ENCODE measurements at regions of chr14 and their contacts with region 1.

Region 1: DNA sequence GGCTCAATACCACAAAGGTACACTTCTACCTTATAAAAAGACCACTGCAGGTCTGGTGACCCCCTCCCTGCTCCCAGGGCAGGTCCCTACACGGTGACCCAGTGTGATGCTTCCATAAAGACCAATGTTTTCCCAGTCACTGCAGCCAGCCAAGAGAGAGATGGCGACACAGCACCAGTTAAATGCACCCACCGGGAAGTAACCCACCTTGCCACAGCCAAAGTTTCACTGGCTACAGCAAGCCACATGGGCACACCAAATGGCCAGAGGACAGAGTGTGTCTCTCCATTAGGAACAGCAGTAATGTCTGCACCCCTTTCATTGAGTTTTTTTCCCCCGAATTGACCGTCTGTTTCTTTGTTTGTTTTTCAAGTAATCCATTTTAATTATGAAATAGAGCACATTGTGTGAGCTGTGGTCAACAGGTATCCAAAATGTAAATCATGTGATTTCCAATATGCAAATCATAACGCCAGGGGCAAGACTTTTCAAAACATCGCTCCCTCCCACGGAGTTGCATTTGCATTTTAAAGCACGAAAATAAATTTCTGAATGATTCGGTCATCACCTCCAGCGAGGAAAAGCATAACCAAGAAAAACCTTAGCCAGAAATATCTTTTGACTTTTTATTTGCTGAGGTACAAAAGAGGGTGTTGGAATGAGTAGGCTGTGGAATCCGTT is 48.9 kb upstream of the EML1 start:
- DNase-seq: peak in 1 of 5 donors; percentile 12
- ATAC-seq: no peak
- H3K4me3 ChIP-seq: no peak overlapping the region
- H3K27ac ChIP-seq: peak overlapping the region in 3 of 12 donors; percentile 75 to 85 (median 82)
- H3K4me1 ChIP-seq: peaks cover 12 to 75% (median 42%) of the 10 kb centered on the region in 12 donors
- H3K27me3 ChIP-seq: no peaks in the 10 kb centered on the region
- CTCF ChIP-seq: no peak
- POLR2A ChIP-seq: no peak

Region 2: DNA sequence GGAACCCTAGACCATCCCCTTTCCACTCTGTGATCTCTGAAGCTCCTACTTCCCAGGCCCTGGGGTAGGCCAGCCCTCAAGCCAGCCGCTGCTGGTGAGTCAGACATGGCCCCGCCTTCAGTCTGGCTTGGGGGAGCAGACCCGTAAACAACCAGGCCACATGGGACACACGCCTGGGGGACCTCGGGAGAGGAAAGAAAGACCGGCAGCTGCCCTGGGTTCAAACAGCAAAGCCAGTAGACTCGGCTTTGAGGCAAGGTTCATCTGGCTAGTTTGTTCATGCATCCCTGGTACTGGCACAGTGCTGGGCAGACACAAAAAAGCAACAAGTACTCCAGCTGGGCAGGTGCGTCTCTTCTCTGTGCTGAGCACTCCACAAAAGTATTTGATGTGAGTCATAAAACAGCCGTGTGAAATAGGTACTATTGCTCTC is 365.5 kb before region 1 on chr14:
- intact Hi-C with region 1: no loop called
- DNase-seq: no peak
- ATAC-seq: no peak
- H3K4me3 ChIP-seq: no peak overlapping the region
- H3K27ac ChIP-seq: no peak overlapping the region
- H3K4me1 ChIP-seq: no peaks in the 10 kb centered on the region
- H3K27me3 ChIP-seq: peaks cover 0 to 38% (median 2%) of the 10 kb centered on the region in 9 donors
- CTCF ChIP-seq: no peak
- POLR2A ChIP-seq: no peak

Region 3: DNA sequence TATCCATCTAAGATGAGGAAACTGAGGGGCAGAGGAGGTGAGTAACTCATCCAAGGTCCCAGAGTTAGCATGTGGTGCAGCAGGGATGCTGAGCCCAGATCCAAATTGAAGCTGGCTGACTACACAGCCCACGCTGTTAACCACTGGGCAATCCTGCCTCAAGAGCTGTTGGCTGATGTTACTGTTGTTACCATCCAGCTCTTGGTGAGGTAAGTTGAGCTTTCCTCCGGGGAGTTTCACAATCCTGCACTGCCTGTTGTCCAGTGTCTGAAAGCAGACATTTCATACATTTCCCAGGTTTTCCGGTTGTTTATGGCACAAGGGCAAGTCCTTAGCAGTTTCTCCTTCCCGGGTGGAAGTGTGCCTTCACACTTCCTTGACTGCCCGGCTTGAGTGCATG is 45.7 kb before region 1 on chr14:
- intact Hi-C with region 1: no loop called
- DNase-seq: no peak
- ATAC-seq: no peak
- H3K4me3 ChIP-seq: no peak overlapping the region
- H3K27ac ChIP-seq: no peak overlapping the region
- H3K4me1 ChIP-seq: peaks cover 0 to 10% (median 0%) of the 10 kb centered on the region in 12 donors
- H3K27me3 ChIP-seq: no peaks in the 10 kb centered on the region
- CTCF ChIP-seq: no peak
- POLR2A ChIP-seq: no peak

Region 4: GRCh38 chr14:99779751-99780150 is 35.4 kb after region 1 on chr14:
- intact Hi-C with region 1: loop called in 1 of 10 experiments (anchors 5 kb)
- DNase-seq: no peak
- ATAC-seq: no peak
- H3K4me3 ChIP-seq: no peak overlapping the region
- H3K27ac ChIP-seq: no peak overlapping the region
- H3K4me1 ChIP-seq: peaks cover 0 to 11% (median 3%) of the 10 kb centered on the region in 12 donors
- H3K27me3 ChIP-seq: no peaks in the 10 kb centered on the region
- CTCF ChIP-seq: no peak
- POLR2A ChIP-seq: no peak

Measured in heart left ventricle (tissue), 16 donors.